Activated CD8-positive, alpha-beta T cell treated with anti-CD3 and anti-CD28 coated beads for 36 hours (primary cell): ENCODE measurements at regions of chr14 and their contacts with region 1.

Region 1: GRCh38 chr14:60266021-60266937 is 17.3 kb downstream of the PPM1A start:
- DNase-seq: peak; percentile 44
- ATAC-seq: peak; percentile 65
- H3K4me3 Mint-ChIP-seq: no peak overlapping the region
- H3K27ac Mint-ChIP-seq: no peak overlapping the region
- H3K4me1 Mint-ChIP-seq: peaks cover 14% of the 10 kb centered on the region
- H3K27me3 Mint-ChIP-seq: no peaks in the 10 kb centered on the region
- CTCF ChIP-seq: peak; percentile 71

Region 2: DNA sequence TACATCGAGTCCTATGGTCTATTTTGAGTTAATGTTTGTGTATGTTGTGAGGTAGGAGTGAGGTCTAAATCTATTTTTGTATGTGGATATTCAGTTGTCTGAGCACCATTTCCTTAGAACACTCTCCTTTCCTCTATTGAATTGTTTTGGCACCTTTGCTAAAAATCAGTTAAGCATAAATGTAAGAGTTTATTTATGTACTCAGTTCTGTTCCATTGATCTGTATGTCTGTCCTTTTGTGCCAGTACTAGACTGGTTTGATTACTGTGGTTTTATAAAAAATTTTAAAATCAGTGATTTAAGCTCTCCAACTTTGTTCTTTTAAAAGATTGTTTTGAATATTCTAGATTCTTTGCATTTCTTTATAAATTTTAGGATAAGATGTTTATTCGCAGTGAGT is 244.7 kb before region 1 on chr14:
- CTCF ChIA-PET with region 1: no interaction called
- POLR2A ChIA-PET with region 1: no interaction called
- intact Hi-C with region 1: no loop called
- DNase-seq: no peak
- ATAC-seq: no peak
- H3K4me3 Mint-ChIP-seq: no peak overlapping the region
- H3K27ac Mint-ChIP-seq: no peak overlapping the region
- H3K4me1 Mint-ChIP-seq: no peaks in the 10 kb centered on the region
- H3K27me3 Mint-ChIP-seq: peaks cover 5% of the 10 kb centered on the region
- CTCF ChIP-seq: no peak

Region 3: DNA sequence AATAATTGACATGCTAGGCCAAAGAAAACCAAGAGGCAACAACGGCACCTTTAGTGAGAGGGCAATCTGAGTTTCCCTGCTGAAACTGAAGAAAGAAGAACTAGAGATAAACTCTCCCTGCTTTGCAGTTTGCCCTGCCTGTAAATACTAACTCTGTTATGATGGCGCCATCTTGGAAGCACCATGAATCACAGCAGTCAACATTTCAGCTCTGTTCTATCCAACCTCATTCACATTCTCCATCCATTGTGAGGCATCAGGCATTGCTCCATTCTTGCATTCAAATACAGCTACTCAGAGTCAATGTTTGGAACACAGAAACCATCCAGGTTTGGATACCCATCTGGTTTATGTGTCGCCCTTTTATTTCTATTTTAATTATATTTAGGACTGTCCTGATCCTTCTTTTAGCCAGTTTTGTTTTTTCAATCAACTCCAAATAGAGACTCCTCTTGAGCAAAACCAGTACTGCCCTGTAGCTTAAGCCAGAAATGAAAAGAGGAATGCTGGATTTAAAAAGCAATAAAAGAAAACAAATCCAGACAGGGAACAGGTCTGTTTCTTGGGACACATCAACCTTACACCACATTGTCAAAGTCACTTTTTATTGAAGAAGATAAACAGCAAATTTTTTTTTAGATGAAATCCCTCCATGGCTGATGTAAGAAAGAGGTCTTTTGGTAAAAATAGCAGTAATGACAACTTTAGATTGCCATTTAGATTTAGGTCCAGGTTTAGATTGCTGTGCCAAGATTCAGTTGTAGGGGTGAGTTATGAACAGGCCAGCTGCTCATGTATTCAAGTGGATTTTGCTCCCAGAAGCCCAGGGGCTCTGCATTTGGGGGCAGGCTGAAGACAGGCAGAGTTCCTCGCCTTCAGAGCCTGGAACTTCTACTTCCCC is 50.5 kb before region 1 on chr14:
- CTCF ChIA-PET with region 1: no interaction called
- POLR2A ChIA-PET with region 1: no interaction called
- intact Hi-C with region 1: no loop called
- DNase-seq: no peak
- ATAC-seq: no peak
- H3K4me3 Mint-ChIP-seq: no peak overlapping the region
- H3K27ac Mint-ChIP-seq: no peak overlapping the region
- H3K4me1 Mint-ChIP-seq: peaks cover 13% of the 10 kb centered on the region
- H3K27me3 Mint-ChIP-seq: no peaks in the 10 kb centered on the region
- CTCF ChIP-seq: no peak

Region 4: DNA sequence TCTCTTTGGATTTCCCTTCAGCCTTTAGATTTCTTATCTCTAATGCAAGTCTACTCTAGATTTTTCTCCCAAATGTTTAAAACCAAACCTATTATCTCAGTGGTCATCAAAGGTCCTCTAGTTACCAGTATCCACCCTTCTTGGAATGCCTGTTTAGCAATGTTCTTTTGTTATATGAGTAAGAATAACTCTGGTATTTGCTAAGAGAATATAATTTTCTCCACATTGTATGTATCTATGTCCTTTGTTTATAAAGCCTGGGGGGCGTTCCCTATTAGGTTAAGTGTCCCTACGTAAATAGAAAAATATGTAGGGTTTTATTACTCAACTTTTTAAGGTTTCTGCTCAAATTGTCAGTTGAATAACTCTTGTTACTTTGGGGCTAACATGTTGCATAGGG is 10.1 kb after region 1 on chr14:
- CTCF ChIA-PET with region 1: interaction called, 15 read pairs
- POLR2A ChIA-PET with region 1: no interaction called
- intact Hi-C with region 1: no loop called
- DNase-seq: no peak
- ATAC-seq: no peak
- H3K4me3 Mint-ChIP-seq: no peak overlapping the region
- H3K27ac Mint-ChIP-seq: no peak overlapping the region
- H3K4me1 Mint-ChIP-seq: peaks cover 55% of the 10 kb centered on the region
- H3K27me3 Mint-ChIP-seq: no peaks in the 10 kb centered on the region
- CTCF ChIP-seq: no peak

Region 5: GRCh38 chr14:60301685-60302084 is 35.4 kb after region 1 on chr14:
- CTCF ChIA-PET with region 1: no interaction called
- POLR2A ChIA-PET with region 1: no interaction called
- intact Hi-C with region 1: no loop called
- DNase-seq: no peak
- ATAC-seq: no peak
- H3K4me3 Mint-ChIP-seq: no peak overlapping the region
- H3K27ac Mint-ChIP-seq: no peak overlapping the region
- H3K4me1 Mint-ChIP-seq: no peaks in the 10 kb centered on the region
- H3K27me3 Mint-ChIP-seq: no peaks in the 10 kb centered on the region
- CTCF ChIP-seq: no peak

Region 6: GRCh38 chr14:60430276-60430675 is 164.0 kb after region 1 on chr14:
- CTCF ChIA-PET with region 1: no interaction called
- POLR2A ChIA-PET with region 1: no interaction called
- intact Hi-C with region 1: no loop called
- DNase-seq: no peak
- ATAC-seq: no peak
- H3K4me3 Mint-ChIP-seq: no peak overlapping the region
- H3K27ac Mint-ChIP-seq: no peak overlapping the region
- H3K4me1 Mint-ChIP-seq: no peaks in the 10 kb centered on the region
- H3K27me3 Mint-ChIP-seq: no peaks in the 10 kb centered on the region
- CTCF ChIP-seq: no peak